Heart left ventricle (tissue), 16 donors: ENCODE measurements at regions of chr3 and their contacts with region 1.

Region 1: DNA sequence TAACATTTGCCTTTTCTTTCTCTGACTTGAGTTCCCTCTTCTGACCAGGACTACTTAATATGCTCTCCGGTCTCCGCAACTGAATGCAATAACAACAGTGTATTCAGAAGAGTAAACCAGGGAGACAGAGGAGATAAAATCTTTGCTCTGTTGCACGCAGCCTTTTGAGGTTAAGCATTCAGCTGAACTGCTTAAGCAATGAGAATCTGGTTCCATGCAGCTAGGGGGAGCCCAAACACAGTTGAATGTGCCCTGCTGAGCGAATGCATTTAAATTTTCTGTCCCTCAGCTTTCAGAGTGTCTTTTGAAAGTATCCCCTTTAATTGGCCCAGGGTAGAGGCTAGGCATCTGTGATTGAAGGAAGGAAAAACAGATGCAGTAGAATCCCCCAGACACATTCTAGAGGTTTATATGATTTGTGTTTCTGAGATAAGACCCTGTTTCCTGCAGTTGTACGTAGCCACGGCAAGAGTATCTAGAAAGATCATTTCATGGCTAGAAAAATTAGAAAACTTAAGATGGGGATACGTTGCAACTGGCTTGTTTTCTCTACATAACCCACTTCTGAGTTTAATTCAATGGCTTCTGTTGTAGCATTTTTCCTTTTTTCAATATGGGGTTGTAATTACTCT is 309.6 kb downstream of the TUSC7 start:
- DNase-seq: peak in 4 of 5 donors; percentile 27 to 35 (median 28)
- ATAC-seq: peak in 3 of 4 donors; percentile 67 to 90 (median 76)
- H3K4me3 ChIP-seq: no peak overlapping the region
- H3K27ac ChIP-seq: no peak overlapping the region
- H3K4me1 ChIP-seq: no peaks in the 10 kb centered on the region
- H3K27me3 ChIP-seq: peaks cover 0 to 15% (median 0%) of the 10 kb centered on the region in 9 donors
- CTCF ChIP-seq: peak; percentile 37 to 76 (median 60)
- POLR2A ChIP-seq: no peak

Region 2: DNA sequence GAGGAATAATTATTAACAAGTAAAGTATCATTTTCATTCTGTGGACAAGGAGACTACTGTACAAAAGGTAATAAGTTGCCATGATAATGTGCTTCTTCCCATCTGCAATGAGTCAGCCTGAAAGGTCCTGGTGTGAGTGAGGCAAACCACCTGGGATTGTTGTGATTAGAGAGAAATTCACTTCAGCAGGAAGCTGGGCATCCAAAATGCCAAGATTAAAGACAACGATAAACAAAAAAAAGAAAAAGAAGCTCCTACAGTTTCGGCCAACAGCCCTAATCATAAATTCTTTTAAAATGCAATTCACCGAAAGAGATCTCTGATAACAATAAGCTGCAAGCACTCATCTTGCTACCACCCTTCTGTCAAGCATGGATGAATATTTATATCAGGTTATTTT is 198.2 kb after region 1 on chr3:
- intact Hi-C with region 1: no loop called
- DNase-seq: no peak
- ATAC-seq: no peak
- H3K4me3 ChIP-seq: no peak overlapping the region
- H3K27ac ChIP-seq: no peak overlapping the region
- H3K4me1 ChIP-seq: no peaks in the 10 kb centered on the region
- H3K27me3 ChIP-seq: no peaks in the 10 kb centered on the region
- CTCF ChIP-seq: no peak
- POLR2A ChIP-seq: no peak

Region 3: DNA sequence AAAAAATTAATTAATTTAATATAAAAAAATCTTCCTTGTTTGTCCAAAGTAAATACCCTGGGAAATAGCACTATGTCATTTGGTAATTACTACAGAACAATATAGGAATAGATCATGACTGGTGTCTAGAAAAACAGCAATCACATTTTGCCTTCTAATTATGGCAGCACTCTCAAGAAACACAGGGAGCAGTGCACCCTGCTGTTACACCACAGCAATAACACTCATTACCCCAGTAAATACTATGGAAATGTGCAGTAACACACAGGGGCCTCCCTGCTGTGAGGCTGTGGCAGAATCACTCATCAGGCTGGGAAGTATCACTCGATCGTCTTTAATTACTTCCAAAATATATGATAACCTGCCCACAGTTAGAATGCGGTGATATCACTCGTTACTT is 336.4 kb after region 1 on chr3:
- intact Hi-C with region 1: loop called in 1 of 10 experiments (anchors 5 kb)
- DNase-seq: no peak
- ATAC-seq: no peak
- H3K4me3 ChIP-seq: no peak overlapping the region
- H3K27ac ChIP-seq: no peak overlapping the region
- H3K4me1 ChIP-seq: no peaks in the 10 kb centered on the region
- H3K27me3 ChIP-seq: no peaks in the 10 kb centered on the region
- CTCF ChIP-seq: peak in 8 of 12 donors; percentile 11 to 39 (median 26)
- POLR2A ChIP-seq: no peak

Region 4: DNA sequence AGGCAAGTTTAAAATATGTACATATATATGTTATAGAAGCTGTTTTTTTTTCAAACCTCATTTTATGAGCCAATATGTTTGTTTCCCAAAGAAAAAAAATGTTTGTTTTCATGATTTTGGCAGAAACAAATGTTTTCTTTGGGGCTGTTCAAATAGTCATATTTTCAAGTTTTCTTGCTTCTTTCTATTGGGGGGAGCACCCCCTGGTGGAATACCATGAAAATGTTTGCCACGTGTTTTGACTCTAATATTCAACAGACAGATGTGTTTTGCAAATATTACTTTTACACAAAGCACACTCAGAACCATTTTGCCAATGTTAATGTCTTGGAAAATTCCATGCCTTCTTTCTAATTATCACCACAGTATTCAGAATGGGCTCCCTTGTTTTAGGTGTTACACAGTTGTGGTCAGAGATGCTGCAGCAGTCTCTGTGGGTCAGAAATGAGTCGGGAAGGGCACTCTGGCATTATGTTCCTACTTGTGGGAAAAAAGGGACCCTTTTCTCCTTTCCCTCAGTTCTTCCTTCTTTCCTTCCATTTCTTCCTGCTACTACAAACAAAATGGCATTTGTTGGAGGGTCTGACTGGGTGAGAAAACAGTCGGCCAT is 507.4 kb after region 1 on chr3:
- intact Hi-C with region 1: loop called in 2 of 10 experiments (anchors 5 to 10 kb)
- DNase-seq: no peak
- ATAC-seq: no peak
- H3K4me3 ChIP-seq: no peak overlapping the region
- H3K27ac ChIP-seq: no peak overlapping the region
- H3K4me1 ChIP-seq: no peaks in the 10 kb centered on the region
- H3K27me3 ChIP-seq: peaks cover 0 to 9% (median 0%) of the 10 kb centered on the region in 9 donors
- CTCF ChIP-seq: peak in 10 of 12 donors; percentile 19 to 55 (median 36)
- POLR2A ChIP-seq: no peak

Region 5: DNA sequence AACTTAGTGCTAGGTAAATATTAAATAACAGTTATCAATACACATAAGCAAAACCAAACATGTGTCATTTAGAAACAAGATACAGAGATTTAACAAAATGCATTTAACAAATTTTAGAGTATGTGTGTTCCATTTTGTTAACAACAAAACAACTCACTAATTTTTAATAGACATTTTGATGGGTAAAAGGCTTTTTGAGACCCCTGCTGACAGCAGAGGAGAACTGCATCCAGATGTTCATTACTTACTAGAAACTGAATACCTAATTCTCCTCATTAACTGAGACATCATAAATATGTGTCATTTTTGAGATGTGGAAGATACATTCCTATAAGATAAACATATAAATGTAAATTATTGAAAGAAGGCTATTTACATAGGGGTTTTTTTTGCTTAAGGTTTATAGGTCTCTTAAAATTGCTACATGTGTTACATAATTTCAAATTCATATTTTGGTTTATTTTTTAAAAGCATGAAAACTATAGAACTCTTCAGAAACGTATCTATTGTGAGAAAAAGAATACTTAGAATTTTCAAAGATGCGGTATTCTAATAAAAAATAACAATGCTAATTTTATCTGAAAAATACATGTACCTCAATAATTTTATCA is 700.2 kb after region 1 on chr3:
- intact Hi-C with region 1: loop called in 1 of 10 experiments (anchors 10 kb)
- DNase-seq: no peak
- ATAC-seq: no peak
- H3K4me3 ChIP-seq: no peak overlapping the region
- H3K27ac ChIP-seq: no peak overlapping the region
- H3K4me1 ChIP-seq: no peaks in the 10 kb centered on the region
- H3K27me3 ChIP-seq: peaks cover 0 to 5% (median 0%) of the 10 kb centered on the region in 9 donors
- CTCF ChIP-seq: peak; percentile 39 to 74 (median 64)
- POLR2A ChIP-seq: no peak